ENCODE measurements at regions of chr21 and their contacts with region 1.

Region 1: GRCh38 chr21:42145569-42146272 is 73.2 kb upstream of the ABCG1 start:
- DNase-seq: peak; percentile 10
- H3K4me3 ChIP-seq: no peak overlapping the region
- H3K27ac ChIP-seq: no peak overlapping the region
- H3K27me3 ChIP-seq: peaks cover 10% of the 10 kb centered on the region
- CTCF ChIP-seq: peak; percentile 96

Region 2: DNA sequence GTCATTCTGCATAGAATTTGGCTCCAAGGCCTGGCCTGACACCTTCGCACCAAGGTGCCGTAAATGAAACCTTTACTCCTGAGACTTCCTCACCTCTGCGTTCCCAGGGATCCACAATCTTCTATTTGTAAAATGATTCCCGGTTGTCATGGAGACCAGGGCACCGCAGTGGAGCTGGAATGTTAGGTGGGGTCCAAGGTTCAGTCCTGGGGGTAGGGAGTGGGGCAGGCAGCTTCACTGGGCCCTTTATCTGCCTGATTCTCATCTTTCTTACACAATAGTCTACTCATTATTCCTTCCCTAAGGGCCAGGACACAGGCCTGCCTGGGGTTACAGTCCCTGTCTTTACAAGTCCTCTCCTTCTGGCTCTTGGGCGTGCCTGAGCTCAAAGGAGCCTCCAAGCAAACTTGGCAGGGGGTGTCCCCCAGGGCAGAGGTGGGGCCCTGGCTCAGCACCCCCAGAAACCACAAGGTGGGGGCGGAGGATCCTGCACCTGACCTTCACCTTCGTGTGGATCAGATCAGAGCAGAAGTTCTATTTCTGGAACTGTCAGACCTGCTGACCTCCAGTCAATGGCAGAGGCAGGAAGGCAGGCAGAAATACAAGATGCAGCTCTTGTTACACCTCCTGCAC is 430.0 kb before region 1 on chr21:
- CTCF ChIA-PET with region 1: no interaction called
- POLR2A ChIA-PET with region 1: no interaction called
- DNase-seq: no peak
- H3K4me3 ChIP-seq: no peak overlapping the region
- H3K27ac ChIP-seq: no peak overlapping the region
- H3K27me3 ChIP-seq: peaks cover 73% of the 10 kb centered on the region
- CTCF ChIP-seq: no peak

Region 3: DNA sequence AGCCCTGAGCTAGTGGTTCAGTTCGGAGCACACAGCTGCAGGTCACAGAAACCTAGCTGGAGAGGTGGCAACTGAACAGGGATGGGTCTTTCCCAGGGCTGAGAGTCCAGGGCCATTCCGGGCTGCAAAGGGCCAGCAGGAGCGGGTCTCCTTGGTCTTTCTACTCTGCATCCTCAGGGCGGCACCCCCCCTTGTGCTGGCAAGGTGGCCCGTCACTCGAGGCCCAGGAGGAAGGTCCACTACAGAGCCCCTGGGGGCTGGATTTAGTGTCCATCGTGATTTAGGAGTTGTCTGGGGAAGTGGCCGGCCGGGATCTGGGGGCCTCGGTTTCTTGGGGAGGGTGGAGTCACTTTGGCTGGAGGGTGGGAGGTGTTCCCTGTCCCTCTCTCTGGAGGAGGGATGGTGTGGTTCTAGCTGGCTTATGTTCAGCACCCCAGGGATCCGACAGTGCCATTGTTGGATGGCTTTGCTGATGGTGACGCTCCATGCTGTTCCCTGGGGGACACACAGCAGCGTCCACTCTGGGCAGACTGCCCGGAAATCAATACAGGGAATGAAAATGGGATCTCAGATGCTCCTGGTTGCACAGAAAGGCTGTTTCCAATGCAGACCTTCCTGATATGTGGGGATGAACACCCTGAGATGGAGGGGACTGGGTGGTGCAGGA is 10.2 kb before region 1 on chr21:
- CTCF ChIA-PET with region 1: interaction called, 10 read pairs
- POLR2A ChIA-PET with region 1: no interaction called
- DNase-seq: no peak
- H3K4me3 ChIP-seq: no peak overlapping the region
- H3K27ac ChIP-seq: no peak overlapping the region
- H3K27me3 ChIP-seq: peaks cover 22% of the 10 kb centered on the region
- CTCF ChIP-seq: no peak

Region 4: GRCh38 chr21:42258153-42258884 is 112.6 kb after region 1 on chr21:
- CTCF ChIA-PET with region 1: interaction called, 56 read pairs
- POLR2A ChIA-PET with region 1: no interaction called
- DNase-seq: no peak
- H3K4me3 ChIP-seq: no peak overlapping the region
- H3K27ac ChIP-seq: no peak overlapping the region
- H3K27me3 ChIP-seq: peaks cover 25% of the 10 kb centered on the region
- CTCF ChIP-seq: peak; percentile 77

Region 5: DNA sequence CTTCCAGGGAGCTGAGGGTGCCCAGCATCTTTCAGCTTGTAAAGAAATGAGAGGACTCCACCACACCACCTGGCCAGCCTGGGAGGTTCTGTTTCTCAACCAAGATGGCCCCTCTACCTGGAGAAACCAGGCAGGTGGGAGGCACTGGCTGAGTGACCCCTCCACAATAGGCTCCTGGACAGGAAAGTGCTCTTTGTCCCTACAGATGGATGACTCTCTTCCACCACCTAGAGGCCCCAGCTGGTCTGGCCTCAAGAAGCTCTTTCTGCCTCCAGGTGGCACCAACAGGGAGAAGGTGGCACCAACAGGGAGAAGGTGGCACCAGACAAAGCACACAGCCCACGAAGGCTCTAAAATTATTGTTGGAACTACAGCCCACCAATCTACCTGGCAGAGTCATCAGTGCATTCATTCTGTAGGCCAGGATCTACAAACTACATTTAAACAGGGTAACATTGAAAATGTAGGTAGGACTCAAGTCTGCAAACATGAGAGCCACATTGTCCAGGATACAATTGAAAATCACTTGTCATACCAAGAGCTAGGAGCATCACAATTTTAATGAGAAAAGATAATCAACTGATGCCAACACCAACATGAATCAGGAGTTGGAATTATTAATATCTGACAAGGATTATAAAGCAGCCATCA is 235.7 kb after region 1 on chr21:
- CTCF ChIA-PET with region 1: interaction called, 19 read pairs
- POLR2A ChIA-PET with region 1: no interaction called
- DNase-seq: no peak
- H3K4me3 ChIP-seq: no peak overlapping the region
- H3K27ac ChIP-seq: no peak overlapping the region
- H3K27me3 ChIP-seq: no peaks in the 10 kb centered on the region
- CTCF ChIP-seq: peak; percentile 72